ENCODE measurements at regions of chr2 and their contacts with region 1.

Region 1: GRCh38 chr2:226791487-226792081 is 8.0 kb downstream of the IRS1 start:
- DNase-seq: peak in 3 of 4 donors; percentile 91 to 96 (median 92)
- ATAC-seq: peak; percentile 97
- H3K4me3 ChIP-seq: peak overlapping the region; percentile 44 to 68
- H3K27ac ChIP-seq: peak overlapping the region; percentile 89 to 91
- H3K4me1 ChIP-seq: peaks cover 16 to 33% of the 10 kb centered on the region in 2 donors
- H3K27me3 ChIP-seq: peaks cover 0 to 2% of the 10 kb centered on the region in 2 donors
- CTCF ChIP-seq: peak; percentile 41 to 67

Region 2: GRCh38 chr2:226215902-226216503 is 575.6 kb before region 1 on chr2:
- intact Hi-C with region 1: loop called in 1 of 2 experiments (anchors 10 kb)
- DNase-seq: peak in 2 of 4 donors; percentile 39 to 61
- ATAC-seq: peak; percentile 96
- H3K4me3 ChIP-seq: no peak overlapping the region
- H3K27ac ChIP-seq: no peak overlapping the region
- H3K4me1 ChIP-seq: no peaks in the 10 kb centered on the region
- H3K27me3 ChIP-seq: no peaks in the 10 kb centered on the region
- CTCF ChIP-seq: peak; percentile 31 to 63

Region 3: GRCh38 chr2:226247289-226248275 is 544.0 kb before region 1 on chr2:
- intact Hi-C with region 1: no loop called
- DNase-seq: no peak
- ATAC-seq: peak; percentile 15
- H3K4me3 ChIP-seq: no peak overlapping the region
- H3K27ac ChIP-seq: no peak overlapping the region
- H3K4me1 ChIP-seq: no peaks in the 10 kb centered on the region
- H3K27me3 ChIP-seq: no peaks in the 10 kb centered on the region
- CTCF ChIP-seq: no peak

Region 4: DNA sequence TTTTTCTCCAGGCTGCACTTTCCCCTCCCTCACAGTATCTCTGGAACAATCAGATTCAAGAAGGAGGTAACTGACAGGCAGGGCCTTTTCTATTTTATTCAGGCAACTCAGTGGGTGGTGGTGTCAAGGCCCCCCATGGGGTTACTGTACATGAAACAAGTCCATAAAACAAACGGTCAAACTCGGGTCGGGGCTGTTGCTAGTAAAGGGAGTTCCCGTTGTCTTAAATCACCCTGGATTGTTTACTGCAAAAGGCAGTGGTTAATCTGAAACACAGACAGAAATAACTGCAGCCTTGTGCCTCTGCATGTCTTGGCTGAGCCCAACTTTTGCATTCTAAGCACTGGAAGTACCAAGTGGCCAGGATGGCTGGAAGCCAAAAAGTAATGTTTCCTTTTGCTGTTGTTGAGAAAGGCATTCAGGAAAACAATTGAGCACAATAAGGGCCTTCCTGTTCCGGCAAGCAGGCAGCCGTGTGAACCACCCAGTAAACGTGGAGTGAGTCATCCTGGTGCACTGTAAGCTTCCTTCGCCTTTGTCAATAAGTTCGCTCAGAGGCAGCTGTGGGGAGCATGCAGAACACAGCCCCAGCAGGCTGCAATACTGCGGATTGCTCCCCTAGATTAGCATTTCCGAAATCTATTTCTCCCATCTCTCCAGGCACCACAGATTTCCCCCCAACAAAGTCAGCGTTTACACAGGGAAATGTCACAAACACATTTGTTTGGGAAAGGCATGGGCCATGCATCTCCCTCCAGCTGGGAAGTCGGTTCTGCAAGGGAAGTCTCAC is 141.5 kb before region 1 on chr2:
- intact Hi-C with region 1: loop called in 1 of 2 experiments (anchors 10 kb)
- DNase-seq: peak; percentile 61 to 80 (median 70)
- ATAC-seq: peak; percentile 96
- H3K4me3 ChIP-seq: no peak overlapping the region
- H3K27ac ChIP-seq: peak overlapping the region; percentile 39 to 72
- H3K4me1 ChIP-seq: peaks cover 9 to 19% of the 10 kb centered on the region in 2 donors
- H3K27me3 ChIP-seq: peaks cover 0 to 19% of the 10 kb centered on the region in 2 donors
- CTCF ChIP-seq: no peak

Region 5: DNA sequence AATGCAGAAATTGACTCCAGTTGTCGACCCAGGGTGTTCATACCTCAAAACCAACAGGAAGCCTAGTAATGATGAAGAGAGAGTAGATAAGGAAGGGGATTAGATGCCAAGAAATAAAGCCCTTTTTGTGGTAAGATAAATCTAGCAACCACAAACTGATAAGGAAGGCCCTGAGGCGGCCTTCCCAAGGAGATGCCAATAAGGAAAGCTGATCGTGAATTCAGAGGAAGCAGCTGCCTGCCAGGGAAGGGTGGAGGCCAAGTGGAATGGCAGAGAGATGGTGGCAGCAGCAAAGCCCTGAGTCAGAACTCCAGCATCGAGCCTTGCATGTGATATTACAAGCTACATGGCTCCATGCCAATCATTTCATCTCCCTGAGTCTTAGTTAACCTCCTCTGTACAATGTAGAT is 118.3 kb before region 1 on chr2:
- intact Hi-C with region 1: no loop called
- DNase-seq: peak in 1 of 4 donors; percentile 38
- ATAC-seq: peak; percentile 33
- H3K4me3 ChIP-seq: no peak overlapping the region
- H3K27ac ChIP-seq: no peak overlapping the region
- H3K4me1 ChIP-seq: peaks cover 0 to 5% of the 10 kb centered on the region in 2 donors
- H3K27me3 ChIP-seq: no peaks in the 10 kb centered on the region
- CTCF ChIP-seq: no peak